ENCODE measurements at regions of chr22 and their contacts with region 1.

Region 1: GRCh38 chr22:20783844-20784723 is 10.2 kb downstream of the SERPIND1 start:
- DNase-seq: peak in 11 of 14 experiments; percentile 8 to 70 (median 23)
- ATAC-seq: peak; percentile 84
- H3K4me3 ChIP-seq: no peak overlapping the region
- H3K4me3 Mint-ChIP-seq: no peak overlapping the region
- H3K27ac ChIP-seq: no peak overlapping the region
- H3K27ac Mint-ChIP-seq: no peak overlapping the region
- H3K4me1 ChIP-seq: no peaks in the 10 kb centered on the region
- H3K4me1 Mint-ChIP-seq: peaks cover 7% of the 10 kb centered on the region
- H3K27me3 ChIP-seq: no peaks in the 10 kb centered on the region
- H3K27me3 Mint-ChIP-seq: no peaks in the 10 kb centered on the region
- CTCF ChIP-seq: peak; percentile 77

Region 2: GRCh38 chr22:20606041-20606783 is 177.9 kb before region 1 on chr22:
- CTCF ChIA-PET with region 1: no interaction called
- POLR2A ChIA-PET with region 1: no interaction called
- intact Hi-C with region 1: loop called in 1 of 2 experiments (anchors 1 kb)
- DNase-seq: peak; percentile 52 to 87 (median 66)
- ATAC-seq: peak; percentile 97
- H3K4me3 ChIP-seq: no peak overlapping the region
- H3K4me3 Mint-ChIP-seq: no peak overlapping the region
- H3K27ac ChIP-seq: no peak overlapping the region
- H3K27ac Mint-ChIP-seq: peak overlapping the region; percentile 59
- H3K4me1 ChIP-seq: peaks cover 15% of the 10 kb centered on the region
- H3K4me1 Mint-ChIP-seq: peaks cover 10% of the 10 kb centered on the region
- H3K27me3 ChIP-seq: no peaks in the 10 kb centered on the region
- H3K27me3 Mint-ChIP-seq: no peaks in the 10 kb centered on the region
- CTCF ChIP-seq: peak; percentile 75

Region 3: GRCh38 chr22:20833225-20833665 is 49.2 kb after region 1 on chr22:
- CTCF ChIA-PET with region 1: no interaction called
- POLR2A ChIA-PET with region 1: no interaction called
- intact Hi-C with region 1: no loop called
- DNase-seq: no peak
- ATAC-seq: no peak
- H3K4me3 ChIP-seq: no peak overlapping the region
- H3K4me3 Mint-ChIP-seq: no peak overlapping the region
- H3K27ac ChIP-seq: no peak overlapping the region
- H3K27ac Mint-ChIP-seq: no peak overlapping the region
- H3K4me1 ChIP-seq: peaks cover 10% of the 10 kb centered on the region
- H3K4me1 Mint-ChIP-seq: peaks cover 12% of the 10 kb centered on the region
- H3K27me3 ChIP-seq: no peaks in the 10 kb centered on the region
- H3K27me3 Mint-ChIP-seq: no peaks in the 10 kb centered on the region
- CTCF ChIP-seq: no peak

Region 4: DNA sequence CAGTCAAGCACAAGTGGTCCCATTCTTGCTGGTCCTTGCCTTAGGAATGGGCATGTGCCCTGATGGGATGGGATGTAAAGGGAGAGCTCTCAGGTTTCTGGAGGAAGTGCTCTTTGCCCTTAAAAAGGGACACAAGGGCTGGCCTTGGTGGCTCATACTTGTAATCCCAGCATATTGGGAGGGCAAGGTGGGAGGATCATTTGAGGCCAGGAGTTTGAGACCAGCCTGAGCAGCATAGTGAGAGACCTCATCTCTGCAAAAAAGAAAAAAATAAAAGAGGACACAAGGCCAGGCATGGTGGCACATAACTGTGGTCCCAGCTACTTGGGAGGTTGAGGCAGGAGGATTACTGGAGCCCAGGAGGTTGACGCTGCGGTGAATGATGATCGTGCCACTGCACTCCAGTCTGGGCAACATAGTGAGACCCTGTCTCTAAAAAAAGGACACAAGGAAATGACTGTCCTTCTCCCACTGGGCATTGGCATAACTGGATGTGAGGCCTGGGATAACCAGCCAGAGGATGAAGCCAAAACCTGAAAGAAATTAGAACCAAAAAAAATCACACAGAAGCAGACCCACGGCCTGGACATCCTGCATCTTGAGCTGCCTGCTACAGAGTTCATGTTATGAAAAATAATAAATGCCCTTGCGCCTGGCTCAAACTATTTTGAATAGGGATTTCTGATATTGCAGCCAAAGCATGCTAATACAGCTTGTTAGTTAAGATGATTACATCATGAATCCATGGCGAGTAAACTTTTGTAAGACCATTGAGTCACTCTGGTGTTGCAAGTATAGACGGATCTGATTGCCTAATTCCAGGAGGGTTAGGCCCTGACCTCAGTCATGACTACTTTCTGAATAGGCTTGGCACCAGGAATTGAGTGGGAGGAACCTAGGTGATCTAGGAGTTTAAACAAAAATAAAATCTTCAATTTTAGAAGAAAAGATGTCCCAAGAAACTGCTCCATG is 120.2 kb after region 1 on chr22:
- CTCF ChIA-PET with region 1: no interaction called
- POLR2A ChIA-PET with region 1: no interaction called
- intact Hi-C with region 1: no loop called
- DNase-seq: peak in 3 of 14 experiments; percentile 11 to 66 (median 55)
- ATAC-seq: no peak
- H3K4me3 ChIP-seq: no peak overlapping the region
- H3K4me3 Mint-ChIP-seq: no peak overlapping the region
- H3K27ac ChIP-seq: no peak overlapping the region
- H3K27ac Mint-ChIP-seq: no peak overlapping the region
- H3K4me1 ChIP-seq: no peaks in the 10 kb centered on the region
- H3K4me1 Mint-ChIP-seq: no peaks in the 10 kb centered on the region
- H3K27me3 ChIP-seq: no peaks in the 10 kb centered on the region
- H3K27me3 Mint-ChIP-seq: no peaks in the 10 kb centered on the region
- CTCF ChIP-seq: no peak

Region 5: DNA sequence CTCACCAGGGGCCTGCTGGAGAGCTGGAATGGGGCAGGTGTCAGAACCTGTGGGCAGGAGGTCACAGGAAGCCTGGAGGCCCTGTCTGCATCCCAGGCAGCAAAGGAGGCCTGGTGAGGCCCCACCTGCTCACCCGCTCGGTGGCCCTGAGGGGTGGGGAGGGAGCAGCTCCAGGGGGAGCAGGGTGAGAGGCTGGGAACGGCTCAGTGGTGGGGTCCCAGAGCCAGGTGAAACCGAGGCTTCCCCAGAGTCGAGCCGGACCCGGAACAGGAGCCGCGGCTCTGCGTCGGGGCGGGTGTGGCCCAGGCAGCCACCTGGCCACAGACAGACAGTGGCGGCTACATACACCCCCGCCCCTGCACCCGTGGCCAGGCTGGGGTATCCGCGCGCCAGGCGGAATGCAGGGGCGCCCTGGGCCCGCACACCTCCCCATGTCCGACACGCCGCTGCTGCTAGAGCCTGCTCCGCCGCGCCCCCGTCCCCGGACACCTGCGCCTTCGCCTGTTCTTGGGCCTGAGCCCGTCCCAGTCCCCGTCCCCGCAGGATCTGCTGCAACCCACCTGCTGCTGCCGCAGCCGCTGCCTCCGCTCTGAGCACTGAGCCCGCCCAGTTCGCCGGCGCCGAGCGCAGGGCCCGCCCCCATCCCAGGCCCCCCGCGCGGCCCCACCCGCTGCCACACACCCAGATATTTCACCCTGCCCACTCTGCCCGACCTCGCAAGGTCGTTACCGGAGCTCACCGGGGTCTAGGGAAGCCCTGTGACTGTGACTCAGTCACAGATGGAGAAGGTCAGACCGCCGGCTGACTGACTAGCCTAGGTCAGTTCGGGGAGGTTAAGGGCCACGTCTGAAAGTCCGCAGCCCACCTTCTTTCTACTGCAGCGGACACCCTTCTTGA is 248.1 kb after region 1 on chr22 and contains the start of gene SLC7A4:
- CTCF ChIA-PET with region 1: no interaction called
- POLR2A ChIA-PET with region 1: no interaction called
- intact Hi-C with region 1: no loop called
- DNase-seq: no peak
- ATAC-seq: peak; percentile 57
- H3K4me3 ChIP-seq: no peak within 1 kb of the TSS
- H3K4me3 Mint-ChIP-seq: no peak within 1 kb of the TSS
- H3K27ac ChIP-seq: no peak within 1 kb of the TSS
- H3K27ac Mint-ChIP-seq: no peak within 1 kb of the TSS
- H3K4me1 ChIP-seq: peaks cover 9% of the 10 kb centered on the region
- H3K4me1 Mint-ChIP-seq: no peaks in the 10 kb centered on the region
- H3K27me3 ChIP-seq: peaks cover 24 to 31% of the 10 kb centered on the region in 2 experiments
- H3K27me3 Mint-ChIP-seq: peaks cover 32% of the 10 kb centered on the region
- CTCF ChIP-seq: no peak
- total RNA-seq, gene SLC7A4: not detected

Measured in CD4-positive, alpha-beta T cell (primary cell).